ENCODE measurements at regions of chr1 and their contacts with region 1.

Region 1: GRCh38 chr1:37595440-37596319 is at the start of gene GNL2:
- DNase-seq: peak; percentile 98
- ATAC-seq: peak; percentile 98
- H3K4me3 Mint-ChIP-seq: peak within 1 kb of the TSS; percentile 99
- H3K27ac Mint-ChIP-seq: peak within 1 kb of the TSS; percentile 96
- H3K4me1 Mint-ChIP-seq: peaks cover 30% of the 10 kb centered on the region
- H3K27me3 Mint-ChIP-seq: peaks cover 3% of the 10 kb centered on the region
- CTCF ChIP-seq: no peak
- total RNA-seq, gene GNL2: 68.0 and 71.4 TPM in 2 replicates

Region 2: DNA sequence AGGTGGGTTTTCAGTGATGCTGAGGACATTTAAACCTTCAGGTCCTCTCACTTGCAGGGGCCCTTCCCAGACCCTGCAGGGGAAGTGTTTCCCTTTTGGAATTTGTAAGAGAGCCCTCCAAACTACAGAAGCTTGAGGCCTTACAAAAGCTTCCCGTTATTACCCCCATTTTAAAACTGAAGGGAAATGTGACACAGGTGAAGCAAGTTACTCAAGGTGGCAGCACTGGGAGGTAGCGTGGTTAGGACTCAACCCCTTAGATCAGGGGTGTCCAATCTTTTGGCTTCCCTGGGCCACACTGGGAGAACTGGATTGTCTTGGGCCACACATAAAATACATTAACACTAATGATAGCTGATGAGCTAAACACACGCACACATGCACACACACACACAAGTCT is 137.2 kb before region 1 on chr1:
- CTCF ChIA-PET with region 1: no interaction called
- POLR2A ChIA-PET with region 1: no interaction called
- intact Hi-C with region 1: no loop called
- DNase-seq: no peak
- ATAC-seq: no peak
- H3K4me3 Mint-ChIP-seq: no peak overlapping the region
- H3K27ac Mint-ChIP-seq: no peak overlapping the region
- H3K4me1 Mint-ChIP-seq: peaks cover 5% of the 10 kb centered on the region
- H3K27me3 Mint-ChIP-seq: no peaks in the 10 kb centered on the region
- CTCF ChIP-seq: no peak

Region 3: GRCh38 chr1:37479255-37480124 is 116.2 kb before region 1 on chr1:
- CTCF ChIA-PET with region 1: no interaction called
- POLR2A ChIA-PET with region 1: interaction called, 7 read pairs
- intact Hi-C with region 1: loop called (anchors 5 kb)
- DNase-seq: peak; percentile 64
- ATAC-seq: peak; percentile 54
- H3K4me3 Mint-ChIP-seq: peak overlapping the region; percentile 99
- H3K27ac Mint-ChIP-seq: peak overlapping the region; percentile 92
- H3K4me1 Mint-ChIP-seq: peaks cover 61% of the 10 kb centered on the region
- H3K27me3 Mint-ChIP-seq: no peaks in the 10 kb centered on the region
- CTCF ChIP-seq: no peak

Region 4: GRCh38 chr1:37553927-37554808 is 41.5 kb before region 1 on chr1 and contains the start of gene SNIP1:
- CTCF ChIA-PET with region 1: no interaction called
- POLR2A ChIA-PET with region 1: no interaction called
- intact Hi-C with region 1: loop called (anchors 1 kb)
- DNase-seq: peak; percentile 84
- ATAC-seq: peak; percentile 98
- H3K4me3 Mint-ChIP-seq: peak within 1 kb of the TSS; percentile 96
- H3K27ac Mint-ChIP-seq: peak within 1 kb of the TSS; percentile 95
- H3K4me1 Mint-ChIP-seq: peaks cover 34% of the 10 kb centered on the region
- H3K27me3 Mint-ChIP-seq: peaks cover 9% of the 10 kb centered on the region
- CTCF ChIP-seq: no peak
- total RNA-seq, gene SNIP1: 34.7 and 35.7 TPM in 2 replicates

Region 5: DNA sequence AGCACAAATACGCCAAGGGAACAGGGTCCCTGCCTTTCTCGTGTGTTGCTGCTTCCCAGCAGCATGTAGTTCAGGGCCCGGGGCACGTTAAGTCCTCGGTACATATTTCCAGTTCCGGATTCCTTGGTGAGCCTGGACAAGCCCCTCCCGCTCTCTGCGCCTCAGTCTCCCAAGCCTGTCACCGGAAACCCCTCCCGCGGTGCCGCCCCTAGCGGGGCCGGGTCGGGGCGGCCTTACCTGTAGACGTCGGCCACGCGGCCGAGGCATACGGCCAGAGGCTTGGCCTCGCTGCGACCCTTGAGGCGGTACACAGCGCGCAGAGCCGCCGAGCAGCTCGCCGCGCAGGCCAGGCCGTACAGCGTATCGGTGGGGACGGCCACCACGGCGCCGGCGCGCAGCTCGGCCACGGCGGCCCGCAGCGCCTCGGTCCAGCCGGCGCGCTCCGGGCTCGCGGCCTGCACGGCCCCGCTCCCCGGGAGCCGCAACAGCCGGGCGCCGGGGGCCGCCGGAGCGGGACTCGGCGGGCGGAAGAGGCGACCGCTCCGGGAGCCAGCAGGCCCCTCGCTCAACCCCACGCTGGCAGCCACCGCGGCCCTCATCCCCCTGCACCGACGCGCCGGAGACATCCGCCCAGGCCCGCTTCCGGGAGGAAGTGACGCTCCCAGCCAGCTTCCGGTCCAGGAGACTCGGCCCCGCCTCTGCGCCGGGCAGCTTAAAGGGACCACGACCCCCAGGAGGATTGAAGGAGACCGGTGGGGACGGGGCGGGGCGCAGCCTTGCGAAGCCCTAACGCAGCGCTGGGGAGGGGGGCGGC is 212.1 kb after region 1 on chr1 and contains the starts of genes C1orf122 and YRDC:
- CTCF ChIA-PET with region 1: no interaction called
- POLR2A ChIA-PET with region 1: no interaction called
- intact Hi-C with region 1: loop called (anchors 5 kb)
- DNase-seq: peak; percentile 93
- ATAC-seq: peak; percentile 89
- H3K4me3 Mint-ChIP-seq: peak within 1 kb of the TSS; percentile 95
- H3K27ac Mint-ChIP-seq: peak within 1 kb of the TSS; percentile 92
- H3K4me1 Mint-ChIP-seq: peaks cover 45% of the 10 kb centered on the region
- H3K27me3 Mint-ChIP-seq: no peaks in the 10 kb centered on the region
- CTCF ChIP-seq: no peak
- total RNA-seq, gene C1orf122: 18.8 and 19.9 TPM in 2 replicates
- total RNA-seq, gene YRDC: 20.6 and 24.2 TPM in 2 replicates

Region 6: GRCh38 chr1:37995751-37996345 is 400.2 kb after region 1 on chr1:
- CTCF ChIA-PET with region 1: no interaction called
- POLR2A ChIA-PET with region 1: interaction called, 6 read pairs
- intact Hi-C with region 1: loop called (anchors 10 kb)
- DNase-seq: peak; percentile 32
- ATAC-seq: peak; percentile 69
- H3K4me3 Mint-ChIP-seq: peak overlapping the region; percentile 79
- H3K27ac Mint-ChIP-seq: no peak overlapping the region
- H3K4me1 Mint-ChIP-seq: peaks cover 14% of the 10 kb centered on the region
- H3K27me3 Mint-ChIP-seq: no peaks in the 10 kb centered on the region
- CTCF ChIP-seq: no peak

Measured in activated B cell treated with CpG ODN at 0.5 μM for 24 hours (primary cell).